Heart right ventricle (tissue), 16 donors: ENCODE measurements at regions of chr20 and their contacts with region 1.

Region 1: GRCh38 chr20:4082406-4083097 is 67.2 kb upstream of the RNF24 start:
- DNase-seq: peak; percentile 44 to 55
- ATAC-seq: peak; percentile 33 to 71 (median 46)
- H3K4me3 ChIP-seq: no peak overlapping the region
- H3K27ac ChIP-seq: peak overlapping the region in 5 of 10 donors; percentile 19 to 88 (median 53)
- H3K4me1 ChIP-seq: peaks cover 0 to 53% (median 8%) of the 10 kb centered on the region in 9 donors
- H3K27me3 ChIP-seq: peaks cover 0 to 6% (median 0%) of the 10 kb centered on the region in 7 donors
- CTCF ChIP-seq: no peak

Region 2: GRCh38 chr20:3786665-3787323 is 295.8 kb before region 1 on chr20 and contains the start of gene CENPB:
- intact Hi-C with region 1: loop called in 1 of 10 experiments (anchors 10 kb)
- DNase-seq: peak; percentile 90 to 94
- ATAC-seq: peak; percentile 91 to 95 (median 92)
- H3K4me3 ChIP-seq: peak within 1 kb of the TSS; percentile 47 to 90 (median 70)
- H3K27ac ChIP-seq: peak within 1 kb of the TSS; percentile 61 to 89 (median 84)
- H3K4me1 ChIP-seq: peaks cover 17 to 43% (median 33%) of the 10 kb centered on the region in 9 donors
- H3K27me3 ChIP-seq: no peaks in the 10 kb centered on the region
- CTCF ChIP-seq: peak; percentile 71 to 95 (median 88)
- total RNA-seq, gene CENPB: 52.3 to 95.7 (median 67.7) TPM